HEK293T (cell line): ENCODE measurements at regions of chr11 and their contacts with region 1.

Region 1: GRCh38 chr11:125091247-125091876 is 20.1 kb downstream of the TMEM218 start:
- DNase-seq: peak; percentile 81

Region 2: DNA sequence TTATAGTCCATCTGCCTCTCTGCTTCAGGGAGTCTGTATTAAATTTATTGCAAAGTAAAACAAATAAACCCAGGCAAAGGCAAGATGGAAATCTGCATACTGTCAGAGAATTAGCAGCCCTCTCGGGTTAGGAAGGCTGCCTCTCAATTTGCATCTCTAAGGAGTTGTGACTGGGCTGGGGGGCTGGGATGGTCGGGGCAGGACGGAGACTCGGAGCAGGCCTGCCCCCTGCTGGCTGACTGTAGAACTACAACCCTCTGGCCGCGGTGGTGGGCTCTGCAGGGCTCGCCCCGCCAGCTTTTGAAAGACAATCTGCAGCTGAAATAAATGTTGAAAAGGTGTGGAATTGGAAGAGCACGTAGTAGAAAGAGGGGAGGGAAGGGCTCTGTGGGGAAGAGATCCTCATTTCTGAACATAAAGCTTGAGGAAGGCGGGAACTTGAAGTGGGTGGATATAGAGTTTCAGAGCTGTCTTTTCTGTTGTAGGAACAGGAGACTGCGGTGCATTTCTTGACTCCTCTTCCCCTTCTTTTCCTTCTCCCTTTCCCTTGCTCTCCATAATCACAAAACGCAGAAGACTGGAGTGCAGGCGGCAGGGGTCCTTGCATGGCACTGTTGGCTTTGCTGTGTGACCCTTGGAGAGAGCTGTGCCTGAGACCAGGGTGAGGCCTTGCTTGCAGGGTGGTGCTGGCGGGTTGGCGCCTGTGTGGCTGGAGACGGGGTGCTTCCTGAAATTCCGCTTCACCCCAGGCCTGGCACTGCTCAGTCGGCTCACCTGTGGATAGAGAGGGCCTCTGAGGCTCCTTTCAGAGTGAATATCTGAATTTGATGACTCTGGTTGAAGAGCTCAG is 50.5 kb after region 1 on chr11:
- CTCF ChIA-PET with region 1: interaction called, 20 read pairs
- POLR2A ChIA-PET with region 1: no interaction called
- DNase-seq: peak; percentile 87

Region 3: DNA sequence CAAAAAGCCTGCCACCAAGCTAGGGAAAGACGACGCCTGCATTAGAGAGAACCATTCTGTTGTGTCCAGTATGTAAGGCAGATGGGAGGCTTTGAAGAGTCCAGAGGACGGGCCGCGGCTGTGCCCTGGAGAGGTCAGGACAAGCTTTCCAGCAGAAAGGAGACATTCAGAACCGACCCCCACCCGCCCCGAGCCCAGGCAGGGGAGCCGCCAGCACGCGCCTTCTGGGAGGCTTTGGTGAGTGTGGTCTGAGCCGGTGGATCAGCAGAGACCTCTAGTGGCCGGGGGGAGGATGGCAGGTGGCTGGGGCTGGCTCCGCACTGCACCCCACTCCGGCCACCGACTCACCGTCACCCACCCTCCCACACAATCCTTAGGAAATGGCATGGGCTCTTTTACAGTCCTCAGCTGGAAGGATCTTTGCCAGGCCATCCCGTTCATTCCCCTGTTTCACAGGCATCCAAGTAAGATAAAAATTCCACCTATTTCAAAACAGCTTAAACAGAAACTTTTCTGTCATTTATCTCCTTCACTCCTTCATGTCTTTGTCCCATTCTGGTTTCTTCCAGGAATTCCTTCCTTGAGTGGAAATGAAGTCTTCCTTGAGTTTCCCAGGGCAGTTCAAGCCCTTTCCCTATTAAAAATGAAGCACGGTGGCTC is 313.5 kb after region 1 on chr11:
- CTCF ChIA-PET with region 1: interaction called, 10 read pairs
- POLR2A ChIA-PET with region 1: no interaction called
- DNase-seq: peak; percentile 91